Thyroid gland (tissue), 4 donors: ENCODE measurements at regions of chr4 and their contacts with region 1.

Region 1: GRCh38 chr4:158778156-158778711 is 9.4 kb downstream of the FNIP2 start:
- DNase-seq: no peak
- H3K4me3 ChIP-seq: no peak overlapping the region
- H3K27ac ChIP-seq: no peak overlapping the region
- H3K4me1 ChIP-seq: peaks cover 13 to 34% of the 10 kb centered on the region in 2 donors
- H3K27me3 ChIP-seq: no peaks in the 10 kb centered on the region
- CTCF ChIP-seq: no peak
- POLR2A ChIP-seq: no peak

Region 2: GRCh38 chr4:158845311-158846041 is 67.2 kb after region 1 on chr4:
- intact Hi-C with region 1: loop called (anchors 10 kb)
- DNase-seq: no peak
- H3K4me3 ChIP-seq: no peak overlapping the region
- H3K27ac ChIP-seq: no peak overlapping the region
- H3K4me1 ChIP-seq: peaks cover 0 to 3% of the 10 kb centered on the region in 2 donors
- H3K27me3 ChIP-seq: no peaks in the 10 kb centered on the region
- CTCF ChIP-seq: no peak
- POLR2A ChIP-seq: no peak